IMR-90 (cell line): ENCODE measurements at regions of chr12 and their contacts with region 1.

Region 1: DNA sequence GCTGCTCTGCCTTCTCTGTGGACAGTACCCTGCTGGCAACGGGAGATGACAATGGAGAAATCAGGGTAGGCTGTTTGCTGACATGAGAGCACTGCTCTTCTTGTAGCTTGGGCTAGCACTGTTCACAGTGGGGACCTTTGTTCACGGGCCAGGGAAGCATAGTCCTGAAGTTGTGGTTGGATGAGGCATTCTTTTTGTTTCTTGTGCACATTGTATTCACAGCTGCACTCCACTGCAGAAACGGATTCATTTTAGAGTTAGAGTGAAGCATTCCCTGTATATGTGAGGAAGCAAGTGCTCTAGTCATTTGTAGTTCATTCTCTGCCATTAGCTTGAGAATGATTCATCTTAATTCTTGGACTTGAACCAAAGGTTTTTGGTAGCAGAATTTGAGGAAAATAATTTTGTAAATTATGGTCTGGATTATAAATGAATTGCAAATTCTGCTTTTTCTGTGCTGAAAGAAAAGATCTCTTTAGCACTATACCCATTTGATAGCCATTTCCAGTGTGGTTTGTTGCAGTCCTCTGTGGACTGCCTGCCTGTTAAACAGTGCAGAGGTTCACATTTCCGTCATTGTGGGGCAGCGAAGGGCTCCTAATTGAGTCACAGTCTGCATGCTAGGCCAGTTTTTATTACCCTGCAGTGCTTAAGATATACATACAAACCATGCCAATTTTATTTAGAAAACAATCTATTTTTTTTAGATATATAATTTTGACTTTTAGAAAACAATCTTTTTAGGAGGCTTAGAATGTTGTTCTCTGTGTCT is 80.6 kb downstream of the APAF1 start:
- DNase-seq: peak; percentile 80
- ATAC-seq: peak; percentile 97
- H3K4me3 ChIP-seq: no peak overlapping the region
- H3K27ac ChIP-seq: peak overlapping the region; percentile 13; the same call in 1 of the 2 replicates
- H3K4me1 ChIP-seq: peaks cover 6% of the 10 kb centered on the region; the same call in 1 of the 2 replicates
- H3K27me3 ChIP-seq: no peaks in the 10 kb centered on the region
- CTCF ChIP-seq: peak; percentile 68
- POLR2A ChIP-seq: no peak
- RAD21 ChIP-seq: peak; percentile 62

Region 2: GRCh38 chr12:98939350-98939749 is 213.7 kb after region 1 on chr12:
- CTCF ChIA-PET with region 1: no interaction called
- POLR2A ChIA-PET with region 1: no interaction called
- dilution Hi-C with region 1: no loop called
- in situ Hi-C with region 1: no loop called
- intact Hi-C with region 1: loop called (anchors 10 kb)
- DNase-seq: peak; percentile 20
- ATAC-seq: no peak
- H3K4me3 ChIP-seq: no peak overlapping the region
- H3K27ac ChIP-seq: no peak overlapping the region
- H3K4me1 ChIP-seq: no peaks in the 10 kb centered on the region
- H3K27me3 ChIP-seq: no peaks in the 10 kb centered on the region
- CTCF ChIP-seq: peak; percentile 44; the same call in 1 of the 2 replicates
- POLR2A ChIP-seq: no peak
- RAD21 ChIP-seq: peak; percentile 41